Tibial artery (tissue), 4 donors: ENCODE measurements at regions of chr21 and their contacts with region 1.

Region 1: DNA sequence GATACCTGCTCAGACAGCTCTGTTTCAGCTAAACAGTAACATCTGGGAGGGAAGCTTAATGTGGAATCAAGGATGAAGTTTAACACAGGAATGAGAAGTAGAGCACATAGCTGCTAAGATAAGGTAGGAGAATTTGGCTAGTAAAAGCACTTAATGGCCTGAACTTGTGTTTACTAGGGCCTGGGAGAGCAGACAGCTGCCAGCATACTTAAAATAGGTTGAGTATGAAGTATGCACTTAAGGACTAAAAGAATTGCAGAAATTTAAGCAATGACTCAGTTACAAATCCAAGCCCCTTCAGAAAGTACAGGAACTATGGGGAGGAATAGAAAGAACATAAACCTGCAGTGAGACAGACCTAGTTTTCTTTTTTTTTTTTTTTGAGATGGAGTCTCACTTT is 53.0 kb downstream of the BACH1 start:
- DNase-seq: no peak
- H3K4me3 ChIP-seq: no peak overlapping the region
- H3K27ac ChIP-seq: peak overlapping the region in 1 of 2 donors; percentile 12
- H3K4me1 ChIP-seq: peaks cover 0 to 33% (median 11%) of the 10 kb centered on the region in 4 donors
- H3K27me3 ChIP-seq: no peaks in the 10 kb centered on the region
- CTCF ChIP-seq: no peak

Region 2: GRCh38 chr21:29091032-29091431 is 260.7 kb before region 1 on chr21:
- intact Hi-C with region 1: loop called (anchors 5 kb)
- DNase-seq: no peak
- H3K4me3 ChIP-seq: no peak overlapping the region
- H3K27ac ChIP-seq: peak overlapping the region; percentile 22 to 61
- H3K4me1 ChIP-seq: peaks cover 0 to 42% (median 13%) of the 10 kb centered on the region in 4 donors
- H3K27me3 ChIP-seq: no peaks in the 10 kb centered on the region
- CTCF ChIP-seq: no peak

Region 3: DNA sequence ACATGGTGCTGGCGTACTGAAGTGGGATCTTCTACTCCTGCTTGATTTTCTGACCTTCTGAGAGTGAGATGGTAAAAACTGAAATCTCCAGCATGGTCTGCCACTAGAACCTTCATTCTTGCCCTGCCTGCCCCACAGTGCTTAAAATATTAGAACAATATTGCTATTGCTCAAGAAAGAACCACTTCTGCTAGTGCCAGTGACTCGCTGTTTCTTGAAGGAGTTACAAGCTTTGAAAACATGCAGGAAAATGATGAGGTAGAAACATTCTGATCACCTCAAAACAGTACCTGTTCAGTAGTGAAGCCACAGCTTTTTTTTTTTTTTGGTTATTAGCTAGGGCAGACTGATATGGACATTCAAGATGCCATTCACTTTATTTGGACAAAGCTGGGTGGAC is 42.4 kb after region 1 on chr21:
- intact Hi-C with region 1: no loop called
- DNase-seq: no peak
- H3K4me3 ChIP-seq: no peak overlapping the region
- H3K27ac ChIP-seq: no peak overlapping the region
- H3K4me1 ChIP-seq: no peaks in the 10 kb centered on the region
- H3K27me3 ChIP-seq: no peaks in the 10 kb centered on the region
- CTCF ChIP-seq: no peak

Region 4: DNA sequence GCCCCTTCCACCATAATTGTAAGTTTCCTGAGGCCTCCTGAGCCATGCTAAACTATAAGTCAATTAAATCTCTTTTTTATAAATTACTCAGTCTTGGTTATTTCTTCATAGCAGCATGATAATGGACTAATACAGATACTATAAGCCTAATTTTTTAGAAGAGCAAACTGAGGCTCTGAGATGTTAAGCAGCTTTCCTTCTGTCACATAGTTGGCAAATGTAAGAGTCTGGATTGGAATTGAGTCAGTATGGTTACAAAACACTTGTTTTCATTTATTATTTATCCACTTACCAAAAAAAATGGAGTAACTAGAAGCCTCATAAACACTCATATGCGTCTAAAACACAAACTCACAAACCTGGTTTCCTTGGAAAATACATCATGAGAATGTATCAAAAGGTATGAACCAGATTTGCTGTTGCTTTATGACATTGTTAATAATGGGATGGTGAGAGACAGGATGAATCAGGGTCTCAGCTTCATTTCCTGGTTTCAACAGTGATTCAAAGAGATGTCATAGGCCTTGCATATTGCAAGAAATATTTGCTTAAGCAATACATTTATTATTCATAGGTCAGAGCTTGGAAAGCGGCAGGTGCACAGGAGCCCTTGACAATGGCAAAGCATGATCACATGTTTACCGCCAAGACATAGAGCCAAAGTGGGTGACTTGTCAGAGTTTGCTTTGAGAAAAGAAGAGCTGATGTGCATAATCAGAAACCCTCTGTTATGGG is 366.6 kb after region 1 on chr21:
- intact Hi-C with region 1: no loop called
- DNase-seq: no peak
- H3K4me3 ChIP-seq: no peak overlapping the region
- H3K27ac ChIP-seq: no peak overlapping the region
- H3K4me1 ChIP-seq: peaks cover 0 to 4% (median 0%) of the 10 kb centered on the region in 4 donors
- H3K27me3 ChIP-seq: no peaks in the 10 kb centered on the region
- CTCF ChIP-seq: no peak